Activated naive CD4-positive, alpha-beta T cell treated with anti-CD3 and anti-CD28 coated beads for 36 hours (primary cell): ENCODE measurements at regions of chr3 and their contacts with region 1.

Region 1: GRCh38 chr3:128095222-128095703 is 28.3 kb downstream of the RUVBL1 start:
- DNase-seq: peak; percentile 87
- H3K4me3 Mint-ChIP-seq: no peak overlapping the region
- H3K27ac Mint-ChIP-seq: no peak overlapping the region
- H3K4me1 Mint-ChIP-seq: peaks cover 5% of the 10 kb centered on the region
- H3K27me3 Mint-ChIP-seq: no peaks in the 10 kb centered on the region

Region 2: DNA sequence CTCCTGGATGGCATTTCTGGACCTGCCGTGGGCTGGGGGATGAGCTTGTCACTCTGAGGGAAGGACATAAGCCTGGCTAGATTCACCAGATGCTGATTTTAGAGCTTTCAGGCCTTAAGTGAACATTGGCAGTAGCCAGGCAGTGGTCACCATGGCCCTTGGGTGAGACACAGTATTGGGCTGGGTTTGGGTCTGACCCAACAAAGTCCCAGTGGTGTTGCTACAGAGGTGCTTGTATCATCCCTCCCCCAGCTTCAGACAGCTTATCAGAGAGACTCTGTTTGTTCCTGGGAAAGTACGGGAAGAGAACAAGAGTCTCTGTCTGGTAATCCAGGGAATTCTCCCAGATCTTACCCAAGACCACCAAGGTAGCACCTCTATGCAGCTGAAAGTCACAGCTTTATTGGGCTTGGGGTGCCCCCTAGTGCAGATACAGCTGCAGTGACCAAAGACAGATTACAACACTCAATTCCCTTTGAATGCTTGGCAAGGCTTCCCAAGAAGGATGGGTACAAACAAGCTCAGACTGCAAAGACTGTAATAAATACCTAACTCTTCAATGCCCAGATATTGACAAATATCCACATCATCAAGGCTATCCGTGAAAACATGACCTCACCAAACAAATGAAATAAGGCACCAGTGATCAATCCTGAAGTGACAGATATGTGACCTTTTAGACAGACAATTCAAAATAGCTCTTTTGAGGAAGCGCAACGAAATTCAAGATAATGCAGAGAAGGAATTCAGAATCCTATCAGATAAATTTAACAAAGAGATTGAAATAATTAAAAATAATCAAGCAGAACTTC is 38.2 kb after region 1 on chr3:
- CTCF ChIA-PET with region 1: interaction called, 13 read pairs
- intact Hi-C with region 1: loop called (anchors 2 kb)
- DNase-seq: peak; percentile 46
- H3K4me3 Mint-ChIP-seq: no peak overlapping the region
- H3K27ac Mint-ChIP-seq: no peak overlapping the region
- H3K4me1 Mint-ChIP-seq: no peaks in the 10 kb centered on the region
- H3K27me3 Mint-ChIP-seq: no peaks in the 10 kb centered on the region

Region 3: GRCh38 chr3:128322066-128323022 is 227.1 kb after region 1 on chr3:
- CTCF ChIA-PET with region 1: interaction called, 15 read pairs
- intact Hi-C with region 1: loop called (anchors 1 kb)
- DNase-seq: peak; percentile 84
- H3K4me3 Mint-ChIP-seq: no peak overlapping the region
- H3K27ac Mint-ChIP-seq: no peak overlapping the region
- H3K4me1 Mint-ChIP-seq: peaks cover 51% of the 10 kb centered on the region
- H3K27me3 Mint-ChIP-seq: no peaks in the 10 kb centered on the region

Region 4: GRCh38 chr3:128487813-128488635 is 392.8 kb after region 1 on chr3:
- CTCF ChIA-PET with region 1: no interaction called
- intact Hi-C with region 1: loop called (anchors 5 kb)
- DNase-seq: peak; percentile 44
- H3K4me3 Mint-ChIP-seq: peak overlapping the region; percentile 72
- H3K27ac Mint-ChIP-seq: no peak overlapping the region
- H3K4me1 Mint-ChIP-seq: peaks cover 45% of the 10 kb centered on the region
- H3K27me3 Mint-ChIP-seq: peaks cover 72% of the 10 kb centered on the region